Naive thymus-derived CD8-positive, alpha-beta T cell (primary cell): ENCODE measurements at regions of chr1 and their contacts with region 1.

Region 1: GRCh38 chr1:203765029-203765837 is at the start of gene LAX1:
- DNase-seq: peak; percentile 28 to 86 (median 68)
- ATAC-seq: peak; percentile 90 to 92
- H3K4me3 Mint-ChIP-seq: peak within 1 kb of the TSS; percentile 91 to 99 (median 96)
- H3K27ac Mint-ChIP-seq: peak within 1 kb of the TSS; percentile 94 to 99 (median 98)
- H3K4me1 Mint-ChIP-seq: peaks cover 20 to 69% (median 65%) of the 10 kb centered on the region in 4 donors
- H3K27me3 Mint-ChIP-seq: no peaks in the 10 kb centered on the region
- polyA plus RNA-seq, gene LAX1: 18.1 to 29.2 (median 18.4) TPM

Region 2: DNA sequence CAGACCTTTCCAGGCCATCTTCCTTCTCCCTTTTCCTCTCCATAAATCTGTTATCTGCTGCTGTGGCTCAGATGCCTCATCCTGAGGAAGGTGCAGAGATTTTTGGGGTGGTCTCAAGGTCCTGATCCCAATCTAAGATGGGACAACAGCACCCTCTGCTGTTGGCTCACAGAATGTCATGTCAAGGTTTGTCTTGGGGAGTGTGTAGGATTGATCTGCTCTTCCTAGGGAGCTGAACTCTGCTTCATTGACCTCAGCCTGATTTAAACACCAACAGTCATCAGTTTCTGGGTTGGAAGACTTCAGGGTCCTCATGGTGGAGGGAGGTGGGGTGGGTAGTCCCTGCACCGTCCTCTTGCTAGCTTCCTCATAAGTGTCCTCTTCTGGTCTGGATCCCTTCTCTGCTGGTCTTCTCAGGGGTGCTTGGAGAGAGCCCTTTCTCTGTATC is 63.1 kb before region 1 on chr1:
- POLR2A ChIA-PET with region 1: interaction called, 10 read pairs
- DNase-seq: peak; percentile 37 to 81 (median 66)
- ATAC-seq: peak; percentile 61 to 78
- H3K4me3 Mint-ChIP-seq: no peak overlapping the region
- H3K27ac Mint-ChIP-seq: peak overlapping the region in 9 of 10 donors; percentile 14 to 90 (median 51)
- H3K4me1 Mint-ChIP-seq: peaks cover 3 to 10% (median 5%) of the 10 kb centered on the region in 4 donors
- H3K27me3 Mint-ChIP-seq: no peaks in the 10 kb centered on the region

Region 3: DNA sequence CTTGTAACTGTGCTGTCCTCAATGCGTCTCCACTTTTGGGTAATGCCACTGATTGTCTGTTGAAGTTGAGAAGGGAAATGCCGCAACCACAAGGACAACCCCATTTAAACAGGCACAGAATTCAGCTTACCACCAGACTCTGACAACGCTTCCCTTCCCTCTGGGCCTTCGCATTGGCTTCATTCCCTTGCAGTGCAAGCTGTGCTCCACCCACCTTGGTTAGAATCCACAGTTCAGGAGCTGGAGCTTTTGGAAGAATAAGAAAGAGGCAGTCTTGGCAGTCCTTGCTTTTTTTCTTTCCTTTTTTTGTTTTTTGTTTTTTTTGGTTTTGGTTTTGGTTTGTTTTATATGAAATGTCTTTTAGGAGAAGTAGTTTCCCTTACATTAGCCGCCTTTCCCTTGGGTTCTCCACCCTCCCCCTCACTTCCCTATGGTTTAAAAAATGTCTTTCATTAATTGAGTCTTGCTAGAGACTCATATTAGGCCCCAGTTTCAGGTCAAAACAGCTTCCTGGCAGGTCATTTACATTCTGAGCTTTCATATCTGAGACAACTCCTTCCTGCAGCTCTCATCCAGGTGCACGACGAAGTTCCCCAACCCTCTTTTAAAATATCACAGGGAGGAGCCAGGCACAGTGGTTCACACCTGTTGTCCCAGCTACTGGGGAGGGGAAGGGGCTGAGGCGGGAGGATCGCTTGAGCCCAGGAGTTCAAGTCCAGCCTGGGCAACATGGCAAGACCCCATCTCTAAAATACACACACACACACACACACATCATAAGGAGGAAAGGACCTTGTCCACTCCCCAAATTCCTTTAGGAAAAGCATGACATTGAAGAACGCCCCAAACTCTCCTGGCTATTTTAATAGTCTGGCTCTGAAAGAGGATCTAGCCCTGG is 20.9 kb before region 1 on chr1:
- POLR2A ChIA-PET with region 1: interaction called, 10 read pairs
- DNase-seq: peak in 4 of 10 donors; percentile 6 to 45 (median 24)
- ATAC-seq: peak; percentile 81 to 93
- H3K4me3 Mint-ChIP-seq: peak overlapping the region; percentile 7 to 79 (median 57)
- H3K27ac Mint-ChIP-seq: peak overlapping the region; percentile 48 to 91 (median 84)
- H3K4me1 Mint-ChIP-seq: peaks cover 9 to 27% (median 23%) of the 10 kb centered on the region in 4 donors
- H3K27me3 Mint-ChIP-seq: no peaks in the 10 kb centered on the region

Region 4: GRCh38 chr1:203776636-203777035 is 11.4 kb after region 1 on chr1:
- POLR2A ChIA-PET with region 1: interaction called, 19 read pairs
- DNase-seq: no peak
- ATAC-seq: peak in 1 of 2 donors; percentile 39
- H3K4me3 Mint-ChIP-seq: no peak overlapping the region
- H3K27ac Mint-ChIP-seq: peak overlapping the region in 8 of 10 donors; percentile 13 to 78 (median 70)
- H3K4me1 Mint-ChIP-seq: peaks cover 5 to 16% (median 7%) of the 10 kb centered on the region in 4 donors
- H3K27me3 Mint-ChIP-seq: no peaks in the 10 kb centered on the region

Region 5: DNA sequence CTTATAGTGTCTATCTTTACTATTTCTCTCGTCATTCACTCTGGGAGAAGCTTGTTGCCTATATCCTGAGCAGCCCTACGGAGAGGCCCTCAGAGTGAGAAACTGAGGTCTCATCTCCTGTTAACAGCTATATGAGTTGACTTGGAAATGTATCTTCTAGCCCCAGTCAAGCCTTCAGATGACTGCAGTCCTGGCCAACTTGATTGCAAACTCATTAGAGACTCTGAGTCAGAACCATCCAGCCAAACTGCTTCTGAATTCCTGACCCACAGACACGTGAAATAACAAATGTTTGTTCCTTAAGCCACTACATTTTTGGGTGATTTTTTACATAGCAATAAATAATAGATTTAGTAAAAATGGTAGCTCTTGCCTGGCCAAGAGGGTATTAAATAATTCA is 26.3 kb after region 1 on chr1:
- POLR2A ChIA-PET with region 1: interaction called, 13 read pairs
- DNase-seq: no peak
- ATAC-seq: no peak
- H3K4me3 Mint-ChIP-seq: no peak overlapping the region
- H3K27ac Mint-ChIP-seq: no peak overlapping the region
- H3K4me1 Mint-ChIP-seq: peaks cover 5 to 16% (median 15%) of the 10 kb centered on the region in 4 donors
- H3K27me3 Mint-ChIP-seq: no peaks in the 10 kb centered on the region

Region 6: DNA sequence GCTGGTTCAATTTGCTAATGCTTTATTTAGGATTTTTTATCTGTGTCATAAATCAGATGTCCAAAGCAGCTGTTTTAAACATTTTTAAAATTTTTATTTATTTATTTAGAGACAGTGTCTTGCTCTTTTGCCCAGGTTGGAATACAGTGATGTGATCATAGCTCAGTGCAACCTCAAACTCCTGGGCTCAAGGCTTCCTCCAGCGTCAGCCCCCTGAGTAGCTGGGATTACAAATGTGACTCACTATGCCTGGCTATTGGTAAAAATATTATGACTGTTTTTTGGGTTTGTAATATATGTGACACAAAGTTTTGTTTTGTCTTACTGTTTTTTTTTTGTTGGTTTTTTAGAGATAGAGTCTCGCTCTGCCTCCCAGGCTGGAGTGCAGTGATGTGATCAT is 42.0 kb after region 1 on chr1:
- POLR2A ChIA-PET with region 1: no interaction called
- DNase-seq: no peak
- ATAC-seq: no peak
- H3K4me3 Mint-ChIP-seq: peak overlapping the region in 2 of 10 donors; percentile 11 to 15
- H3K27ac Mint-ChIP-seq: peak overlapping the region in 4 of 10 donors; percentile 44 to 71 (median 54)
- H3K4me1 Mint-ChIP-seq: peaks cover 12 to 58% (median 44%) of the 10 kb centered on the region in 4 donors
- H3K27me3 Mint-ChIP-seq: no peaks in the 10 kb centered on the region

Region 7: DNA sequence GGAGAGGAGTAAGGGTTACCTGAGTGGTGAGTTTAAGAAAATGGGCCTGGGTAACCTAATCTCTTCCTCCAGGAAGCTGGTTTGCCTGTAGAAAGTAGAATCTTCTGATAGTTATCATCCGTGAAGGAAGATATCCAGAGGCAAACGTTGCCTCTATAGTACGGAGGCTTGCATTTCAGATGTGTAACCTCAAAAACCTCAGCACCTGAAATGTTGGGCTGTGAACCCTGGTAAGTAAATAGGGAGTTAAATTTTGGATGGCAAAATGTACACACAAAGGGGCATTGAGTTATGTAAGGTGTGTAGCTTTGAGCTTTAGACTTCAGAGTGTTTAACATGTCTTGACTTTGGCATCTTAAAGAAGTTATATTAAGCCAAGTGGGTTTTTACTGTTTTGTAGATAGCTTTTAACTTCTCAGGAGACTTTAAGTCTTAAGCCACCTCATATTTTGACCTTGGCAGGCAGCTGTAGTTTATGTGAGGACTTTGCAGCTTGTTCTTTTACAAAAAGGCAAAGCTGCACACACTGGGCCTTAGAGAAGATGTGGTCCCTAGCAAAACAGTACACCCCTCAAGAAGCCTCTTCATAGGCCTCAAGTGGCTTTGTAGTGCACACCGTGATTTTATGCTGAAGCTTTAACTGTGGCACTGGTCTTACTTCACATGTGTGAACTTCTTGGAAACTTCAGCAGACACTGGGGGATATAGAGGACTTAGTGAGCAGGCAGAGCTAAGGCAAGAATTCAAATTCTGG is 179.6 kb after region 1 on chr1:
- POLR2A ChIA-PET with region 1: no interaction called
- DNase-seq: no peak
- ATAC-seq: no peak
- H3K4me3 Mint-ChIP-seq: no peak overlapping the region
- H3K27ac Mint-ChIP-seq: no peak overlapping the region
- H3K4me1 Mint-ChIP-seq: no peaks in the 10 kb centered on the region
- H3K27me3 Mint-ChIP-seq: peaks cover 0 to 9% (median 2%) of the 10 kb centered on the region in 5 donors